Right ventricle myocardium superior (tissue), 1 donor: ENCODE measurements at regions of chr14 and their contacts with region 1.

Region 1: DNA sequence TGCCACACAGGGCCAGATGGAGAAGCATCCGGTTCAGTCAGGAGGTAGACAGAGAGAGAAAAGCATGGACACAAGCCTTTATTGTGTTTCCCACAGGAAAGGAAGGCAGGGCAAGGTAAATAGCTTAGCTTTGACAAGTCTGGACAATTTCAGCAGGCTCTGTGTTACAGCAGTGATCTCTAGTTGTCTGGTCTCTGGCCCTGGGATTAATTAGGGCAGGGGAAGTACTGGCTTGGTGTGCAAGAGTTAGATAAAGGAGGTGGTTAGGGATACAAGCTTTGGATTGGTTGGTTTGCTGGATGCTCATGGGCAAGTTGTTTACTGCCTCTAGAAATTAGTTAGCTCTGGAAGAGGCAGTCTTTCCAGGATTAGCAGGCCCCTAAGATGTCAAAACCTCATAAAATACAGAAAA is 15.1 kb upstream of the NGDN start:
- DNase-seq: no peak
- ATAC-seq: no peak

Region 2: DNA sequence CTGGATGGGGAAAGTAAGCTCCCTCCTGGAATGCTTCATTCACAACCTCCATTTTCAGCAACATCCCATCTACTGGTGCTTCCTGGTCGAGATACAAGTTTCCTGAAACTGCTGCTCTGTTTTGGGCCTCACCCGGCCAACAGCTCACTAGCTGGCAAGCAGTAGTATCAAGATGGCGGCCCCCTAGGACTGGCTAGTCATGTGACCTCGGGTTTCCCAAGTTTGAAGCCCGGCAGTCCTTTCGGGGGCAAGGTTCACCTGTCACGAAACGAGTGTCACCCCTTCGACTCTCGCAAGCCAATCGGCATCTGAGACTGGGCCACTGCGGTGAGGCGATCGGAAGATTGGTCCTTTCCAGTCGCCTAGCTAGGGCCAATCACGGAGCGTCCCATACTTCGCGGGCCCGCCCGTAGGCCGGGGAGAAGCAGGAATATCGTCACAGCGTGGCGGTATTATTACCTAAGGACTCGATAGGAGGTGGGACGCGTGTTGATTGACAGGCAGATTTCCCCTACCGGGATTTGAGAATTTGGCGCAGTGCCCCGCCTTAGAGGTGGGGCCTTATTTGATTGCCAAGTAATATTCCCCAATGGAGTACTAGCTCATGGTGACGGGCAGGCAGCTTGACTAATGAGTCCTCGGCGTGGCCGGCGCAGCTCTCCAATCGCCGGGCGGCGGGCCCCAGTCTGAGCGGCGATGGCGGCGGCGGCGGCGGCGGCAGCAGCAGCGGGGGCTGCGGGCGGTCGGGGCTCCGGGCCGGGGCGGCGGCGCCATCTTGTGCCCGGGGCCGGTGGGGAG is 133.5 kb before region 1 on chr14 and contains the start of gene PABPN1:
- intact Hi-C with region 1: loop called (anchors 10 kb)
- DNase-seq: peak; percentile 98
- ATAC-seq: peak; percentile 95
- total RNA-seq, gene PABPN1: 67.7 TPM

Region 3: DNA sequence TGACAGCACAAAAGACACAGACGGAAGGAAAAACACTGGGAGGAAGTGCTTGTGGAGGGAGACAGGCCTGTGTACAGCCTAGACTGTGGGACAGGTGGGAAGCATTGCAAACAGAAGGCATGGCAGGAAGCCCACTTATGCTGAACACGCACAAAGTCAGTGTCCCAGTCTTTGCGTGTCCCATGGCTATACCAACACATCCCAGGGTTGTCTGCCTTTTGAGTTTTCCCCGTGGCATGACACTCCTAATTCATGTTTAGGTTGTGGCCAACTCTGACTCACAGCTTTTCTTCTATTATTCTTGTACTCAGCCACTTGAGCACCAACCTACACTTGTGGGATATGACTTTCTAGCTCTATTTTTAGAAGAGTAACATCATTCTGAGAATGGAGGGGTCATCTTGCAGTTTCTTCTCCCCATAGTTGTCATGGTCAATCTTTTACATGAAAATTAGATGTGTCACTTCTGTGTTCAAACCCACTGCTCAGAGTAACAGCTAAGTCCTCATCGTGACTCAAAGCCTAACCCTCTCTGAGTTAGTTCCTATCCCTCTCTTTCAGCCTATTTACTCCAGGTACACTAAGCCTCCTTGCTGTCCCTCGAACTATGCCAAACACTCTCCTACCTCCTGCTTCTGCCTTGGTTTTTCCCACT is 151.6 kb after region 1 on chr14:
- intact Hi-C with region 1: no loop called
- DNase-seq: no peak
- ATAC-seq: no peak